B cell (primary cell): ENCODE measurements at regions of chr20 and their contacts with region 1.

Region 1: GRCh38 chr20:50504231-50504823 is 5.9 kb upstream of the PTPN1 start:
- DNase-seq: peak; percentile 65
- ATAC-seq: peak; percentile 72
- H3K4me3 ChIP-seq: no peak overlapping the region
- H3K4me3 Mint-ChIP-seq: peak overlapping the region; percentile 40
- H3K27ac ChIP-seq: no peak overlapping the region
- H3K27ac Mint-ChIP-seq: peak overlapping the region; percentile 75
- H3K4me1 ChIP-seq: peaks cover 9 to 34% of the 10 kb centered on the region in 2 donors
- H3K4me1 Mint-ChIP-seq: peaks cover 36% of the 10 kb centered on the region
- H3K27me3 ChIP-seq: no peaks in the 10 kb centered on the region
- H3K27me3 Mint-ChIP-seq: no peaks in the 10 kb centered on the region
- CTCF ChIP-seq: peak; percentile 56

Region 2: GRCh38 chr20:50478162-50479036 is 25.9 kb before region 1 on chr20:
- CTCF ChIA-PET with region 1: interaction called, 26 read pairs
- POLR2A ChIA-PET with region 1: no interaction called
- intact Hi-C with region 1: no loop called
- DNase-seq: peak; percentile 84
- ATAC-seq: peak; percentile 99
- H3K4me3 ChIP-seq: no peak overlapping the region
- H3K4me3 Mint-ChIP-seq: peak overlapping the region; percentile 44
- H3K27ac ChIP-seq: no peak overlapping the region
- H3K27ac Mint-ChIP-seq: peak overlapping the region; percentile 67
- H3K4me1 ChIP-seq: peaks cover 20 to 32% of the 10 kb centered on the region in 2 donors
- H3K4me1 Mint-ChIP-seq: peaks cover 33% of the 10 kb centered on the region
- H3K27me3 ChIP-seq: no peaks in the 10 kb centered on the region
- H3K27me3 Mint-ChIP-seq: no peaks in the 10 kb centered on the region
- CTCF ChIP-seq: peak; percentile 73

Region 3: GRCh38 chr20:50484276-50484976 is 19.9 kb before region 1 on chr20:
- CTCF ChIA-PET with region 1: interaction called, 45 read pairs
- POLR2A ChIA-PET with region 1: no interaction called
- intact Hi-C with region 1: no loop called
- DNase-seq: no peak
- ATAC-seq: no peak
- H3K4me3 ChIP-seq: peak overlapping the region in 2 of 5 experiments; percentile 78 to 83
- H3K4me3 Mint-ChIP-seq: peak overlapping the region; percentile 92
- H3K27ac ChIP-seq: peak overlapping the region; percentile 89
- H3K27ac Mint-ChIP-seq: peak overlapping the region; percentile 90
- H3K4me1 ChIP-seq: peaks cover 27 to 39% of the 10 kb centered on the region in 2 donors
- H3K4me1 Mint-ChIP-seq: peaks cover 42% of the 10 kb centered on the region
- H3K27me3 ChIP-seq: no peaks in the 10 kb centered on the region
- H3K27me3 Mint-ChIP-seq: no peaks in the 10 kb centered on the region
- CTCF ChIP-seq: no peak

Region 4: GRCh38 chr20:50516180-50516934 is 12.0 kb after region 1 on chr20:
- CTCF ChIA-PET with region 1: interaction called, 18 read pairs
- POLR2A ChIA-PET with region 1: interaction called, 3 read pairs
- intact Hi-C with region 1: no loop called
- DNase-seq: peak; percentile 83
- ATAC-seq: peak; percentile 78
- H3K4me3 ChIP-seq: peak overlapping the region in 4 of 5 experiments; percentile 15 to 52 (median 25)
- H3K4me3 Mint-ChIP-seq: peak overlapping the region; percentile 88
- H3K27ac ChIP-seq: peak overlapping the region; percentile 94 to 95
- H3K27ac Mint-ChIP-seq: peak overlapping the region; percentile 98
- H3K4me1 ChIP-seq: peaks cover 94 to 97% of the 10 kb centered on the region in 2 donors
- H3K4me1 Mint-ChIP-seq: peaks cover 91% of the 10 kb centered on the region
- H3K27me3 ChIP-seq: no peaks in the 10 kb centered on the region
- H3K27me3 Mint-ChIP-seq: no peaks in the 10 kb centered on the region
- CTCF ChIP-seq: no peak

Region 5: GRCh38 chr20:50546729-50547314 is 42.5 kb after region 1 on chr20:
- CTCF ChIA-PET with region 1: interaction called, 79 read pairs
- POLR2A ChIA-PET with region 1: no interaction called
- intact Hi-C with region 1: no loop called
- DNase-seq: peak; percentile 70
- ATAC-seq: peak; percentile 78
- H3K4me3 ChIP-seq: peak overlapping the region in 4 of 5 experiments; percentile 2 to 39 (median 20)
- H3K4me3 Mint-ChIP-seq: peak overlapping the region; percentile 88
- H3K27ac ChIP-seq: peak overlapping the region; percentile 48 to 83
- H3K27ac Mint-ChIP-seq: peak overlapping the region; percentile 93
- H3K4me1 ChIP-seq: peaks cover 93 to 96% of the 10 kb centered on the region in 2 donors
- H3K4me1 Mint-ChIP-seq: peaks cover 68% of the 10 kb centered on the region
- H3K27me3 ChIP-seq: no peaks in the 10 kb centered on the region
- H3K27me3 Mint-ChIP-seq: no peaks in the 10 kb centered on the region
- CTCF ChIP-seq: no peak

Region 6: GRCh38 chr20:50569864-50570836 is 65.8 kb after region 1 on chr20:
- CTCF ChIA-PET with region 1: interaction called, 292 read pairs
- POLR2A ChIA-PET with region 1: no interaction called
- intact Hi-C with region 1: loop called (anchors 1 kb)
- DNase-seq: peak; percentile 71
- ATAC-seq: peak; percentile 87
- H3K4me3 ChIP-seq: no peak overlapping the region
- H3K4me3 Mint-ChIP-seq: peak overlapping the region; percentile 36
- H3K27ac ChIP-seq: peak overlapping the region; percentile 24 to 83
- H3K27ac Mint-ChIP-seq: peak overlapping the region; percentile 89
- H3K4me1 ChIP-seq: peaks cover 26 to 38% of the 10 kb centered on the region in 2 donors
- H3K4me1 Mint-ChIP-seq: peaks cover 71% of the 10 kb centered on the region
- H3K27me3 ChIP-seq: no peaks in the 10 kb centered on the region
- H3K27me3 Mint-ChIP-seq: no peaks in the 10 kb centered on the region
- CTCF ChIP-seq: peak; percentile 54

Region 7: DNA sequence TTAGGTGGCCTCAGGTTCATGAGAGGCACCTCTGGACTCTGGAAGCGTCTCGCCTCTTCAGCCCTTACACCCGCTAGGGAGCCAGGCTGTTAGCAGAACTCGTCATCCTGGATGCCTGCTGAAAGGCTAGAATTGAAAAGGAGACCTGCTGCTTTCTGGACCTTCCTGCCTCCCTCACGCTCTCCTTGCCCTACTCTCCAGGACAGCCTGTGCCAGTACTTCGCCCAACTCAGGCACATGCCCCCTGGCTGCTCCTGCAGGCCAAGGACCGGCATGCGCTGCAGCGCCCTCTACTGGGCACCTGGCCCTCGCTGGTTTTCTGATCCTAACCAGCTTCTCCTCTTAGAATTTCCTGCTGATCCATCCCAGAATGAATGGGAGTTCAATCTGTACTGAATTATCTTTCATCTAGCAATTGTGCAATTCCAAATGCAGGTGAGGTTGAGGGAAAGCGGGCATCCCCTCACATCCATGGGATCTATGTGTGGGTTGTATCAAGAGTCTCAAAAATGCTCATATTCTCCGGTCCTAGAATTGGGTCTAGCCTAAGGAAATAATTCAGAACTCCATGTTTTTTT is 83.8 kb after region 1 on chr20:
- CTCF ChIA-PET with region 1: interaction called, 69 read pairs
- POLR2A ChIA-PET with region 1: interaction called, 4 read pairs
- intact Hi-C with region 1: no loop called
- DNase-seq: peak; percentile 79
- ATAC-seq: peak; percentile 58
- H3K4me3 ChIP-seq: no peak overlapping the region
- H3K4me3 Mint-ChIP-seq: no peak overlapping the region
- H3K27ac ChIP-seq: no peak overlapping the region
- H3K27ac Mint-ChIP-seq: peak overlapping the region; percentile 50
- H3K4me1 ChIP-seq: peaks cover 4 to 10% of the 10 kb centered on the region in 2 donors
- H3K4me1 Mint-ChIP-seq: peaks cover 13% of the 10 kb centered on the region
- H3K27me3 ChIP-seq: no peaks in the 10 kb centered on the region
- H3K27me3 Mint-ChIP-seq: no peaks in the 10 kb centered on the region
- CTCF ChIP-seq: peak; percentile 98

Region 8: DNA sequence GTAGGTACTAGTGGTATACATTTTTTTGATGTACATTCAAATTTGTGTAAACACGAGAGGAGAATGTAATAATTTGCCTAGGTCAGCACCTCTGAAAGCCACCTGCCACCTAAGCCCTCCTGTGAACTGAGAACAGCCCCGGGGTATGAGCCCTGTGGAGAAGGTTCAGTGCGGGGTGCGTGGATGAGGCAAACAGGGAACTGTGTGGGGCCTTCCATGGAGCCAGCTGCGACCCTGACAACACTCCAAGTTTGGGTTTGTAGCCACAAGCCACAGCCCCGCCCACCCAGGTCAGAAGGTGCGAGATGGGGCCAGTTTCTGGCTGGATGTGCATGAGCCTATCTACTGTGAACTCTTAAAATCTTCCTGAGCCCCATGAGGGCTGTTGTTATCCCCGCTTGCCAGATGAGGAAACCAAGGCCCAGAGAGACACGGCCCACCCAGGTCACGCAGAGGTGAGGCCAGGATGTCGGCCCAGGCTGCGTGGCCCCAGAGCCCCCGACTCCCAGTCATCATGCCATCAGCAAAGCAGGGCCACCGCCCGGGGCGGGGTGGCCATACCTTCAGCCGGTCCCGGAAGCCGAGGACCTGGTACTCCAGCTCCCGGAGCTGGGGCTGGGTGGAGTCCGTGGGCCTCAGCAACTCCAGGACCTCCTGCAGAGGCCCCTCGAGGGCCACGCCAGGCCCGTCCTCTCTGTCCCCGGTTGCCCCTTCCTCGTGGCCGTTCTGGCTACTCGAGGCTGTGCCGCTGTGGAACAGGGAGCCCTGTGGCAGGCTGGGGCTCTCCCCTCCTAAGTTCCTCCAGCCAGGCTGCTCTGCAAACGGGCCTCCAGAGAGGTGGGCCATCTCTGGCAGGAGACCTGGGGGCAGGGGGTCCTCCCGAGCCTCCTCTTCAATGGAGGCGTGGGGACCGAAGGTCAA is 97.4 kb after region 1 on chr20:
- CTCF ChIA-PET with region 1: no interaction called
- POLR2A ChIA-PET with region 1: no interaction called
- intact Hi-C with region 1: no loop called
- DNase-seq: no peak
- ATAC-seq: no peak
- H3K4me3 ChIP-seq: no peak overlapping the region
- H3K4me3 Mint-ChIP-seq: no peak overlapping the region
- H3K27ac ChIP-seq: no peak overlapping the region
- H3K27ac Mint-ChIP-seq: no peak overlapping the region
- H3K4me1 ChIP-seq: peaks cover 0 to 3% of the 10 kb centered on the region in 2 donors
- H3K4me1 Mint-ChIP-seq: peaks cover 4% of the 10 kb centered on the region
- H3K27me3 ChIP-seq: peaks cover 0 to 22% (median 2%) of the 10 kb centered on the region in 4 experiments
- H3K27me3 Mint-ChIP-seq: peaks cover 11% of the 10 kb centered on the region
- CTCF ChIP-seq: no peak